Mammary epithelial cell (primary cell): ENCODE measurements at regions of chr12 and their contacts with region 1.

Region 1: GRCh38 chr12:2682296-2683251 is 112.2 kb upstream of the FKBP4 start:
- DNase-seq: peak; percentile 15
- H3K4me3 ChIP-seq: no peak overlapping the region
- H3K27ac ChIP-seq: no peak overlapping the region
- H3K4me1 ChIP-seq: no peaks in the 10 kb centered on the region
- H3K27me3 ChIP-seq: no peaks in the 10 kb centered on the region
- CTCF ChIP-seq: peak; percentile 48 to 67

Region 2: DNA sequence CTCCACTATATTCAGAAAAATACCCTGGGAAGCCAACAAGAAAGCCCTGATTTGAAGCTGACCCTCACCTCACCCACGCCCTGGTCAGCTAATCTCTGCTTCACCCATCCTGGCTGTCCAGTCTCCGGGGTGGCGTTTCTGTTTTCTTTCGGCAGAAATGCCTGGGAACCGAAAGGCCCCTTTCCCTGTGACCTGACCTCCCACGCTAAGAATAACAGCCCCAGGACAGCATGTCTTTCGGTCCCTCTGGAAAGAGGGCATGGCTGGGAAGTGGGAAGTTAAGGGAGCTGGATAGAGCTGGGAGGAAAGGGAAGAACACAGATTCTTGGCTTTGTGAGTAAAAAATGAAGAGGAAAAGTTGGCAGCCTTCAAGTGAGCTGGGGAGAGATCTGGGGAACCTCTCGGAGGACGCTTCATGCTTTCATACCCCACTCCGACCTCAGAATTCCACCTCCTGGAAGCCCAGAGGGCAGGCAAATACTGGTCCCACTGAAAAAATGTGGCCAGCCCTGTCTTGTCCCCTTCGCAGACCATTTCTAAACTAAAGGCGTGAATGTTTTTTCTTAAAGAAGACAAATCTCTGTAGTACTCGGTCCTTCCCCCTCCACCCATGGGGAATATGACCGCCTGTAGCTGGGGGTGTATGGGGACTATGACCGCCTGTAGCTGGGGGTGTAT is 50.8 kb before region 1 on chr12:
- CTCF ChIA-PET with region 1: no interaction called
- dilution Hi-C with region 1: no loop called
- in situ Hi-C with region 1: no loop called
- intact Hi-C with region 1: no loop called
- DNase-seq: no peak
- H3K4me3 ChIP-seq: no peak overlapping the region
- H3K27ac ChIP-seq: no peak overlapping the region
- H3K4me1 ChIP-seq: no peaks in the 10 kb centered on the region
- H3K27me3 ChIP-seq: no peaks in the 10 kb centered on the region
- CTCF ChIP-seq: no peak

Region 3: DNA sequence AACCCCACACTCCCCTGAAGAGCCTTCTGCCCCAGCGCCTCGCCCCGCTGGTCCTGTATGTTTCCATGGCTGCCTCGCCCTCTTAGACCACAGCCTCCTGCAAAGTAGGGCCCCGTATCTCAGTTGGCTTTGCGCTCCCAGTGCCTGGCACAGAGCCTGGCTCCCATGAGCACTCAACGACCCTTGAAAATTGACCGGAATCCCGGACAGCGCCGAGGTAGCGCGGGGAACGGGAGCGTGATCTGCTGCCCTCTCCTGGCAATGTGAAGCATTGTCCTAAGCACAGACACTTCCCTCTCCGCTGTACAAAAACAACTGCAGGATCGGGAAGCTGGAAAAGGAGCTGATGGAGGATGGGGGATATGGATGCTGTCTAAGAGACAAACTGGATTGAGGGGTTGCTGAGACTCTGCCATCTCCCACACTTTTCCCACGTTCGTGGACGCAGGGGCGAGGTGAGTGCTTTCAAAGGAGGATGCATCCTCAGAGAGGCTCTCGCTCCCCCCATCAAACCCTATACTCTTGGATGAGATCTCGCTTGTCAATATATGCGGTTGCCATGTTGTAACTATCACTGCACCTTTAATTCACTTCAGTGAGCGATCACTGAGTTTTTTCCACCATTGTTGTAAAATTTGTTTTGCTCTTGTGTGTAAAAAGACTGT is 101.5 kb after region 1 on chr12:
- CTCF ChIA-PET with region 1: no interaction called
- dilution Hi-C with region 1: no loop called
- in situ Hi-C with region 1: no loop called
- intact Hi-C with region 1: loop called (anchors 1 kb)
- DNase-seq: peak; percentile 18
- H3K4me3 ChIP-seq: peak overlapping the region in 1 of 3 experiments; percentile 25
- H3K27ac ChIP-seq: no peak overlapping the region
- H3K4me1 ChIP-seq: no peaks in the 10 kb centered on the region
- H3K27me3 ChIP-seq: no peaks in the 10 kb centered on the region
- CTCF ChIP-seq: peak; percentile 88 to 94

Region 4: DNA sequence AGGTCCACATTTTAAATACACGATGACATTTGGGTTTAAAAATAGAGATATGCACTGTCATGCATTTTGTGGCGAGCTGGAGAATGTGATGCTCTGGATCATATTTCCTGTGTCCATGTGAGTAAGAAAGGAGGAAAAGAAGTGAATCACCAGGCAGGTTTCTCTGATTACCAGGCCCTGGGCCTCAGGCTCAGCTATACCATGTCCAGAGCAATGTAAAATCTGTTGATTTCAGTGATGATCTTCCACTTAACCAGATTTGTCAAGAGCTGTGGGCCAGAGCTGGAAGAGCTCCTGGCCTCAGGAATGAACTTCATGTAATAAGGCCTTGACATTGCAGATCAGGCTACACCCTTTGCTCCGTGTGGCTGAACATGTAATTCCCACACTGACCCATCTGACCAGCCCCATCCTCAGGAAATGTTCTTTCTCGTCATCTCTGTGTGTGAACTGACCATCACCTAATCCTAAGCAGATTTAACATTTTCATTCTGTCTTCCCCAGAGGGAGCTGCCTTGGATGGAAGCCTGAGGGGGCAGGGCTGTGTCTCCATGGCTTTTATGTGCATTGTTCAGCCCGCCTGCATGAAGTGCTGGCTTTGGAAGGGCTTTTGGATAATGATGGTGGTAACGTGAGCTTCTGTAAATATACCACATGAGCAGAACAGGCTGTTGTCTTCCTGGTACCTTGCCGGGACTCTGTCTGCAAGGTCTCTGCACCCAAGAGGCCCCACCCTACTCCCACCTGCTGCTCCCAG is 1015.8 kb after region 1 on chr12:
- CTCF ChIA-PET with region 1: no interaction called
- dilution Hi-C with region 1: no loop called
- in situ Hi-C with region 1: no loop called
- intact Hi-C with region 1: no loop called
- DNase-seq: peak; percentile 84
- H3K4me3 ChIP-seq: no peak overlapping the region
- H3K27ac ChIP-seq: peak overlapping the region; percentile 60
- H3K4me1 ChIP-seq: peaks cover 19% of the 10 kb centered on the region
- H3K27me3 ChIP-seq: no peaks in the 10 kb centered on the region
- CTCF ChIP-seq: no peak